Endothelial cell of umbilical vein (primary cell): ENCODE measurements at regions of chr12 and their contacts with region 1.

Region 1: GRCh38 chr12:65948320-65949008 is 124.2 kb downstream of the HMGA2 start:
- DNase-seq: peak; percentile 100
- H3K4me3 ChIP-seq: peak overlapping the region in 2 of 3 experiments; percentile 13 to 42
- H3K27ac ChIP-seq: peak overlapping the region; percentile 96
- H3K4me1 ChIP-seq: peaks cover 67% of the 10 kb centered on the region
- H3K27me3 ChIP-seq: no peaks in the 10 kb centered on the region
- CTCF ChIP-seq: no peak
- POLR2A ChIP-seq: no peak

Region 2: GRCh38 chr12:65886996-65887395 is 61.5 kb before region 1 on chr12:
- CTCF ChIA-PET with region 1: interaction called, 3 read pairs
- POLR2A ChIA-PET with region 1: no interaction called
- dilution Hi-C with region 1: no loop called
- intact Hi-C with region 1: loop called (anchors 1 kb)
- DNase-seq: peak; percentile 51
- H3K4me3 ChIP-seq: no peak overlapping the region
- H3K27ac ChIP-seq: peak overlapping the region; percentile 87
- H3K4me1 ChIP-seq: peaks cover 66% of the 10 kb centered on the region
- H3K27me3 ChIP-seq: no peaks in the 10 kb centered on the region
- CTCF ChIP-seq: no peak
- POLR2A ChIP-seq: no peak

Region 3: GRCh38 chr12:65891987-65892481 is 56.4 kb before region 1 on chr12:
- CTCF ChIA-PET with region 1: interaction called, 3 read pairs
- POLR2A ChIA-PET with region 1: no interaction called
- dilution Hi-C with region 1: no loop called
- intact Hi-C with region 1: loop called (anchors 1 kb)
- DNase-seq: peak; percentile 91
- H3K4me3 ChIP-seq: peak overlapping the region in 1 of 3 experiments; percentile 17
- H3K27ac ChIP-seq: peak overlapping the region; percentile 96
- H3K4me1 ChIP-seq: peaks cover 45% of the 10 kb centered on the region
- H3K27me3 ChIP-seq: no peaks in the 10 kb centered on the region
- CTCF ChIP-seq: no peak
- POLR2A ChIP-seq: peak; percentile 55

Region 4: GRCh38 chr12:65930114-65930828 is 18.2 kb before region 1 on chr12:
- CTCF ChIA-PET with region 1: interaction called, 18 read pairs
- POLR2A ChIA-PET with region 1: interaction called, 3 read pairs
- dilution Hi-C with region 1: no loop called
- intact Hi-C with region 1: loop called (anchors 1 kb)
- DNase-seq: peak; percentile 48
- H3K4me3 ChIP-seq: peak overlapping the region in 1 of 3 experiments; percentile 30
- H3K27ac ChIP-seq: peak overlapping the region; percentile 79
- H3K4me1 ChIP-seq: peaks cover 79% of the 10 kb centered on the region
- H3K27me3 ChIP-seq: no peaks in the 10 kb centered on the region
- CTCF ChIP-seq: no peak
- POLR2A ChIP-seq: no peak

Region 5: GRCh38 chr12:65935906-65936901 is 12.3 kb before region 1 on chr12:
- CTCF ChIA-PET with region 1: interaction called, 18 read pairs
- POLR2A ChIA-PET with region 1: interaction called, 5 read pairs
- dilution Hi-C with region 1: no loop called
- intact Hi-C with region 1: loop called (anchors 1 kb)
- DNase-seq: peak; percentile 97
- H3K4me3 ChIP-seq: peak overlapping the region in 1 of 3 experiments; percentile 22
- H3K27ac ChIP-seq: peak overlapping the region; percentile 96
- H3K4me1 ChIP-seq: peaks cover 80% of the 10 kb centered on the region
- H3K27me3 ChIP-seq: no peaks in the 10 kb centered on the region
- CTCF ChIP-seq: no peak
- POLR2A ChIP-seq: peak; percentile 52

Region 6: GRCh38 chr12:65962921-65963861 is 14.7 kb after region 1 on chr12:
- CTCF ChIA-PET with region 1: interaction called, 4 read pairs
- POLR2A ChIA-PET with region 1: no interaction called
- dilution Hi-C with region 1: no loop called
- intact Hi-C with region 1: loop called (anchors 1 kb)
- DNase-seq: peak; percentile 85
- H3K4me3 ChIP-seq: no peak overlapping the region
- H3K27ac ChIP-seq: peak overlapping the region; percentile 70
- H3K4me1 ChIP-seq: peaks cover 36% of the 10 kb centered on the region
- H3K27me3 ChIP-seq: no peaks in the 10 kb centered on the region
- CTCF ChIP-seq: peak; percentile 7 to 11
- POLR2A ChIP-seq: no peak